ENCODE measurements at regions of chr5 and their contacts with region 1.

Region 1: GRCh38 chr5:109688971-109689739 is 572 bp upstream of the MAN2A1 start:
- DNase-seq: peak; percentile 92
- H3K4me3 ChIP-seq: peak overlapping the region; percentile 74 to 95 (median 86)
- H3K27ac ChIP-seq: peak overlapping the region; percentile 96 to 99 (median 98)
- H3K4me1 ChIP-seq: peaks cover 0 to 34% (median 30%) of the 10 kb centered on the region in 4 donors
- H3K27me3 ChIP-seq: no peaks in the 10 kb centered on the region
- CTCF ChIP-seq: no peak
- EP300 ChIP-seq: no peak
- POLR2A ChIP-seq: peak; percentile 79 to 86

Region 2: DNA sequence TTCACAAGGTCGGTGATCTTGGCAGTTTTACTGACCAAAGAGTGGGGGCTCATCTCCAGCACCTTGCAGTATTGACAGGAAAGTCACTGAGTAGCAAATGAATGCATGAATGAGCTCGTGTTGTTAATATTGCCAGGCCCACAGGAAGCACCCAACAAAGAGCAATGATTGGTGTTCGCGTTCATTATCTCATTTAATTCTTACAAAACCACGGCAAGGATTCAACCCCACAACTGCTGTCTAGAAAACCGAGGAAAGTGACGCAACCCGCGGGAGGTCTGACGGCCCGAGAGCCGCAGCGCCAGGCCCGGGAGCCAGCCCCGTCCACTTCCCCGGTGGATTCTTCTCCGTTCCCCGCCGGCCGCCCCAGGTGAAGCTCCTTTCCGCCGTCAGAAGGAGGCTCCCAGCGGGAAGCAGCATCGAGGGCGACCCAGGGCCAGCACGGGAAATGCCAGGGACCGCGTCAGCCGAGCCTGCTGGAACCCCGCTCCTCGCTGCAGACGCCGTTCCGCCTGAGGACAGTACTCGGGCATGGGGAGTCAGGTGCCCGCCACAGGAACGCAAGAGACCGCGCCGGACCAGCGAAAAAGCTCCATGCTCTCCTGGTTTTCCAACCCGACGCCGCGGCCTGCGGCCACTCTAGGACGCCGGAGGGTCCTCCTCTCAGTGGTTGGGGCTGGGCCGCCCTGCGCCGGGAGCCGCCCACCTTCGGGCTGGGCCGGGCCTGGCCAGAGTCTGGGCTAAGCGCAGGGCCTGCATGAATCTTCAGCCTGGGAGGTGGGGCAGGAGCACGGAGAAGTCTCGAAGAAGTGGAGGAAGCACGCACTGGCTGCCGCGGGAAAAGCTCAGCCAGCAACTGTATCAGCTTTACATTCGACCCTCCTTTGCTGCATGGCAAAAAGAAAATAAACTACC is 961.2 kb before region 1 on chr5:
- intact Hi-C with region 1: loop called (anchors 5 kb)
- DNase-seq: peak; percentile 96
- H3K4me3 ChIP-seq: peak overlapping the region; percentile 67 to 84 (median 73)
- H3K27ac ChIP-seq: peak overlapping the region; percentile 88 to 91 (median 89)
- H3K4me1 ChIP-seq: peaks cover 0 to 19% (median 4%) of the 10 kb centered on the region in 4 donors
- H3K27me3 ChIP-seq: no peaks in the 10 kb centered on the region
- CTCF ChIP-seq: no peak
- EP300 ChIP-seq: peak in 1 of 4 donors; percentile 17
- POLR2A ChIP-seq: peak; percentile 82 to 84

Region 3: DNA sequence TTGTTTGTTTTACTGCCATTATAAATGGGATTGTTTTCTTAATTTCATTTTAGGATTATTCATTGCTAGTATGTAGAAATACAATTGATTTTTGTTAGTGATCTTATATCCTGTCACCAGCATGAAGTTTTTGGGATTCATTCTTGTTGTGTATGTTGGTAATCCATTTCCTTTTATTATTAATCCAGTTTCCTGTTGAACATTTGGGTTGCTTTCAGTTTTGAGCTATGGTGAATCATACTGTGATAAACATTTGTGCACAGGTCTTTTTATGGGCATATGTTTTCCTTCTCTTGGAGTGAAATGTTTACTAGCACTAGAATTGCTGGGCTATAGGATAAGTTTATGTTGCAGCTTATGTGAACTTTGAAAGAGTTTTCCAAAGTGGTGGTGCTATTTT is 70.2 kb after region 1 on chr5:
- intact Hi-C with region 1: no loop called
- DNase-seq: no peak
- H3K4me3 ChIP-seq: no peak overlapping the region
- H3K27ac ChIP-seq: no peak overlapping the region
- H3K4me1 ChIP-seq: peaks cover 0 to 7% (median 0%) of the 10 kb centered on the region in 4 donors
- H3K27me3 ChIP-seq: no peaks in the 10 kb centered on the region
- CTCF ChIP-seq: no peak
- EP300 ChIP-seq: no peak
- POLR2A ChIP-seq: no peak

Region 4: DNA sequence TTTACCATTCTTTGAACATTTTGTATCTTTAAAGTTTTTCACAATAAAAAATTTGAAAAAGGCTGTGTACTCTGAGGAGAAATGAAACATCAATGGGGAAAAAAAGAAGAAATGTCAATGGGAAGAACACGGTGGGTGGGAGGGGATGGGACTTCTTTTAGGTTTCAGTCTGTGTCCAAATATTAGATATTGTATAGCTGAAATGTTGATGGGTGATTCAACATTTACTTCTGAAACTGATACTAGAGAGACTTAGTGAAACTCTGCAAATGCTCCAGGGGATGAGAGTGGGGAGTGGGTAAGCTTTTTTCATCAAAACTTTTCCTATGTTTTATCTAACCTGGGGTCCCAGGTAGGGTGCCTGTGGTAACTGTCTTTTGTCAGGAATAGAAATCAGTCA is 312.5 kb after region 1 on chr5:
- intact Hi-C with region 1: loop called (anchors 5 kb)
- DNase-seq: no peak
- H3K4me3 ChIP-seq: no peak overlapping the region
- H3K27ac ChIP-seq: peak overlapping the region; percentile 49 to 75 (median 67)
- H3K4me1 ChIP-seq: peaks cover 0 to 43% (median 41%) of the 10 kb centered on the region in 4 donors
- H3K27me3 ChIP-seq: no peaks in the 10 kb centered on the region
- CTCF ChIP-seq: no peak
- EP300 ChIP-seq: no peak
- POLR2A ChIP-seq: no peak

Region 5: DNA sequence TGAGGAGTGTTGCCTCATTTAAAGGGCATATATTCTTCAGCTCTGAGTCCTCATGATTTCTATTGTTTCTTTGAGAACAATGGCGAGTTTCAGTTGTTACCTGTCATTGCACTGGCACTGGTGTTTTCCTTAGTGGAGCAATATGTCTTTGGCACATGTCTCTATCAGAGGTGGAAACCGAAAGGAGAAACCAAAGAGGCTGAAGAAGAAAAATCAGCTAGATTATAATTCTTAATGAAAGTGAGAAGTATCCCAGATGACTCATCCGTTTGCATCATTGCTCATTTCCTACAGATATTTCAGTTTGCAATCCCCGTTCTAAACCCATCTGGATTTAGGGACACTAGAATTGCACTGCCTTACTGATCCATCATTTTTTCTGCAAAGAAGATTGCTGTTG is 712.7 kb after region 1 on chr5:
- intact Hi-C with region 1: no loop called
- DNase-seq: no peak
- H3K4me3 ChIP-seq: no peak overlapping the region
- H3K27ac ChIP-seq: no peak overlapping the region
- H3K4me1 ChIP-seq: no peaks in the 10 kb centered on the region
- H3K27me3 ChIP-seq: no peaks in the 10 kb centered on the region
- CTCF ChIP-seq: no peak
- EP300 ChIP-seq: no peak
- POLR2A ChIP-seq: no peak

Region 6: GRCh38 chr5:110625376-110625999 is 936.3 kb after region 1 on chr5:
- intact Hi-C with region 1: loop called (anchors 5 kb)
- DNase-seq: no peak
- H3K4me3 ChIP-seq: no peak overlapping the region
- H3K27ac ChIP-seq: no peak overlapping the region
- H3K4me1 ChIP-seq: no peaks in the 10 kb centered on the region
- H3K27me3 ChIP-seq: no peaks in the 10 kb centered on the region
- CTCF ChIP-seq: peak in 3 of 4 experiments; percentile 18 to 56 (median 41)
- EP300 ChIP-seq: no peak
- POLR2A ChIP-seq: no peak

Measured in sigmoid colon (tissue), 7 donors.